Uterus (tissue), 4 donors: ENCODE measurements at regions of chr4 and their contacts with region 1.

Region 1: DNA sequence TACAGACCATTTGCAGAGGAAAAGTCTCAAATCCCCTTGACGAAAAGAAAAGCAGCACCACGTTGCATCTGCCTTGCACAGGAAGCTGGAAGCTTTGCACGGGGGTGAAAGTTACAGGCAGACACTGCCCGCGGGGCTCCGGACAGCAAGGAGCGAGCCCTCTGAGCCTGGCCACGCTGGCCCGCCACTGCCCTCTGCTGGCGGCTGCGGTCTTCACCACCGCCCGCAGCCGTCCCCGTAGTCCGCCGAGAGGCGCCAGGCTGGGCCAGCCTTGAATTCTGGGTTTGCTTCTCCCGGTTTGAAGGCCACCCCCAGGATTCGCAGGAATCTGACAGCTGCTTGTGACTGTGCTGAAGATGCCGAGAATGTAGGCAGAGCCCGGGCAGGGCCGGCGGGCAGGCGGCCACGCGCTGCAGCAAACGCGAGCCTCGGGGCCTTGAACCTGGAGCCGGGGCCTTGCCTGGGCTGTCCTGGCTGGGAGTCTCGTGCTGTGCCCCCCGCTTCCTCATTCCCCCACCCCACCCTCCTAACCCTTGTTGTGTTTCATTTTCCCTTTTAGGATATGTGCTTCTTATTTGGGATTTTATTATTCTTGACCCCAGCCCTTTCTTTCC is 49.2 kb downstream of the ENPP6 start:
- DNase-seq: peak; percentile 61 to 77
- H3K4me3 ChIP-seq: no peak overlapping the region
- H3K27ac ChIP-seq: no peak overlapping the region
- H3K4me1 ChIP-seq: no peaks in the 10 kb centered on the region
- H3K27me3 ChIP-seq: no peaks in the 10 kb centered on the region
- CTCF ChIP-seq: peak; percentile 90 to 98 (median 93)
- POLR2A ChIP-seq: no peak

Region 2: GRCh38 chr4:183471946-183472708 is 696.4 kb before region 1 on chr4:
- intact Hi-C with region 1: loop called (anchors 10 kb)
- DNase-seq: peak; percentile 82 to 89
- H3K4me3 ChIP-seq: no peak overlapping the region
- H3K27ac ChIP-seq: peak overlapping the region in 1 of 2 donors; percentile 19
- H3K4me1 ChIP-seq: no peaks in the 10 kb centered on the region
- H3K27me3 ChIP-seq: no peaks in the 10 kb centered on the region
- CTCF ChIP-seq: peak; percentile 64 to 92 (median 76)
- POLR2A ChIP-seq: no peak

Region 3: DNA sequence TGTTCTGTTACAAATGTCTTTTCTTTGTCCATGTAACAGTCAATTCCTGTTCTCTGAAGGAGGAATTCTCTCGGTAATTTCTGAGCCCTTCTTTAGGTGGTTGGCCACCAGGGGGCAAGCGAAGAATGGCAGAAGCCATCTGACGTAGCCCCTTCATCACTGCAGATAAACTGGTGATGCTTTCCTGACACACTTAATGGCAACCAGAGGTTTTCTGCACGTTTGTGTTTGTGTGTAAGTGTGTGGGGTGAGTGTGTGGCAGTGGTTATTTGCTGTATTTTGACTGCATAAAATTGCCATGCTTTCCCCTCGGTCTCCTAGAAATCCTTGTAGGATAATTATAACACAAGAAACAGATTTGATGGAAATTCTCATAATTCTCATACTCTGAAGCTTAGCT is 328.2 kb before region 1 on chr4:
- intact Hi-C with region 1: loop called (anchors 5 kb)
- DNase-seq: peak; percentile 72 to 75
- H3K4me3 ChIP-seq: no peak overlapping the region
- H3K27ac ChIP-seq: no peak overlapping the region
- H3K4me1 ChIP-seq: no peaks in the 10 kb centered on the region
- H3K27me3 ChIP-seq: no peaks in the 10 kb centered on the region
- CTCF ChIP-seq: peak; percentile 80 to 88 (median 82)
- POLR2A ChIP-seq: no peak

Region 4: GRCh38 chr4:183984566-183984965 is 183.9 kb before region 1 on chr4:
- intact Hi-C with region 1: no loop called
- DNase-seq: no peak
- H3K4me3 ChIP-seq: no peak overlapping the region
- H3K27ac ChIP-seq: no peak overlapping the region
- H3K4me1 ChIP-seq: peaks cover 3 to 5% of the 10 kb centered on the region in 2 donors
- H3K27me3 ChIP-seq: no peaks in the 10 kb centered on the region
- CTCF ChIP-seq: no peak
- POLR2A ChIP-seq: no peak